Astrocyte of the cerebellum (primary cell): ENCODE measurements at regions of chr9 and their contacts with region 1.

Region 1: GRCh38 chr9:38311382-38312270 is 80.9 kb upstream of the ALDH1B1 start:
- DNase-seq: no peak
- H3K4me3 ChIP-seq: no peak overlapping the region
- CTCF ChIP-seq: no peak

Region 2: DNA sequence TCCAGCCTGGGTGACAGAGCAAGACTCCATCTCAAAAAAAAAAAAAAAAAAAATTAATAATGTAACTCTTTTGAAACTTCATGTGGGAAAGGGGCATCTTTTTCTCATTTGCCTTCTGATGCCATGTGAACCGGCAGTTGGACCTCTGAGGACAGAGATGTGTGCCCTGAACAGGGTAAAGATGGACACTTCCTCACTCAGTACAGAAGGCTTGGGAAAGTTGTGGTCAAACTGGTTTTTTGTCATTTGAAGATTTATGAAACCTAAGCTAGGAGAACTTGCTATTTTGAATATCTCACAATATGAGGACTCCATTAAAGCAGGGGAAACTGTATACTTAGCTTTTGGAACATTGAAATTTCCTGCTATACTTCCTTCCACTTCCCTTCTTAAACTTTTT is 66.7 kb before region 1 on chr9:
- in situ Hi-C with region 1: loop called (anchors 5 kb)
- DNase-seq: no peak
- H3K4me3 ChIP-seq: no peak overlapping the region
- CTCF ChIP-seq: no peak

Region 3: GRCh38 chr9:38339087-38339486 is 27.5 kb after region 1 on chr9:
- in situ Hi-C with region 1: no loop called
- DNase-seq: peak; percentile 65
- H3K4me3 ChIP-seq: no peak overlapping the region
- CTCF ChIP-seq: no peak